Ovary (tissue), 10 donors: ENCODE measurements at regions of chr4 and their contacts with region 1.

Region 1: DNA sequence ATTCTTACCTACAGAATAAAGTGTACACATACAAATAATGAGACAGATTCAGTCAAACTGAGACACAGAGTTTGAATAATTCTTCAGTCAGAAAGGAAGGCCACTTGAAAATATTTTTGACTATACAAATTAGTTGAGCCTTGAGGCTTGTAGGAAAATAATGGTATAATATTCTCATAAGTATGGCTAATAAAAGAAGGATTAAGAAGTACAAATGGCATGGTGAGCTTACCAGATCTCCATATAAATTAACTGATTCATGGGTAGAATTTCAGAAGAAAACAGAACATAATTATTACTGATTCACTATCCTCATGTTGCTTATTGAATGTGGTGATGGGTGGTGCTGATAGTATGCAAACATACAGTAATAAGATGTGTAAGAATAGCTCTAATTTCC is 401.1 kb downstream of the PCDH18 start:
- DNase-seq: no peak
- H3K4me3 ChIP-seq: no peak overlapping the region
- H3K27ac ChIP-seq: no peak overlapping the region
- H3K4me1 ChIP-seq: no peaks in the 10 kb centered on the region
- H3K27me3 ChIP-seq: no peaks in the 10 kb centered on the region
- CTCF ChIP-seq: no peak
- EP300 ChIP-seq: no peak
- POLR2A ChIP-seq: no peak

Region 2: GRCh38 chr4:136909626-136910025 is 221.6 kb before region 1 on chr4:
- intact Hi-C with region 1: no loop called
- DNase-seq: no peak
- H3K4me3 ChIP-seq: no peak overlapping the region
- H3K27ac ChIP-seq: no peak overlapping the region
- H3K4me1 ChIP-seq: no peaks in the 10 kb centered on the region
- H3K27me3 ChIP-seq: no peaks in the 10 kb centered on the region
- CTCF ChIP-seq: no peak
- EP300 ChIP-seq: no peak
- POLR2A ChIP-seq: no peak

Region 3: DNA sequence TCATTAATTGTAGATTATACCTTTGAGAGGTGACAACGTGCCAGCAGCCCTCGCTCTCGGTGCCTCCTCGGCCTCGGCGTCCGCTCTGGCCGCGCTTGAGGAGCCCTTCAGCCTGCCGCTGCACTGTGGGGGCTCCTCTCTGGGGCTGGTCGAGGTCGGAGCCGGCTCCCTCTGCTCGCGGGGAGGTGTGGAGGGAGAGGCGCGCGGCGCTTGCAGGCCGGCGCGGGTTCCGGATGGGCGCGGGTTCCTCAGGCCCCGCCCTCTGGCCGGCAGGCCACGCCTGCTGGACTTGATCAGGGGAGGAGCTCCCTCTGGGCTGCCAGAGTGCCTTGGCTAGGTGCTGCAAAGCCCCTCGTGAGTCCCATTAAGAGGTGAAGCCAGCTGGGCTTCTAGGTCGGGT is 722.2 kb after region 1 on chr4:
- intact Hi-C with region 1: loop called in 1 of 4 experiments (anchors 10 kb)
- DNase-seq: no peak
- H3K4me3 ChIP-seq: no peak overlapping the region
- H3K27ac ChIP-seq: no peak overlapping the region
- H3K4me1 ChIP-seq: no peaks in the 10 kb centered on the region
- H3K27me3 ChIP-seq: no peaks in the 10 kb centered on the region
- CTCF ChIP-seq: no peak
- EP300 ChIP-seq: no peak
- POLR2A ChIP-seq: no peak

Region 4: DNA sequence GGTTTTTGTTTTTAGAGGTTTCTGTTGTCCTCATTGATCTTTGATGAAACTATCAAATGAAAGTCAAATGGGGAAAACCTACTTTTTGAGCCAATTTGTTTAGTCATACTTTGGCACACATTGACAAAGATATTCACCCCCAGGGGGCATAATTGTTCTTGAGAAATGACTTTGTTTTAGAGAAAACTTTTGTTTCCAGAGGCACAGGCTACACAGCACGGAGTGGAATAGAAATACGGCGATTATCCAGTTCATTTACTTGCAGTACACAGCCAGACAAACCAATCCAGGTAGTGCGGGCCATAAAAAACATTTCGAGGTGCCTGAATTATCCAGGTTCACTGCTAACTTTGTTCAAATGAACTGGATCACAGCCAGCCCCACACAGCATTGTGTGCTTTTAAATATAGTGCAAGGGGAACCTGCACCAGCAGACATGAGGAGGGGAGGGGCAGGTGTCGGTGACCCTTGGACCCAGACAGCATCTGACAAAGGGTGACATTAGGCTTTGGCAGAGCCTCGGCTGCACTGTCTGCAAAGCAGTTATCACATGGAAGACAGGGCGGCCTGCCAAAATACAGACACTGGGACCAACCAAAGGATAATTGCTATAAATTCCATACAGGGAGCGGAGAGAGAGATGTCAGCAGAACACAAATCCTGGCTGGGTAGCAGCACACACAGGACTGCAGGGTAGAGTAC is 1704.8 kb after region 1 on chr4:
- intact Hi-C with region 1: no loop called
- DNase-seq: no peak
- H3K4me3 ChIP-seq: no peak overlapping the region
- H3K27ac ChIP-seq: no peak overlapping the region
- H3K4me1 ChIP-seq: no peaks in the 10 kb centered on the region
- H3K27me3 ChIP-seq: no peaks in the 10 kb centered on the region
- CTCF ChIP-seq: no peak
- EP300 ChIP-seq: no peak
- POLR2A ChIP-seq: no peak